ENCODE measurements at regions of chr12 and their contacts with region 1.

Region 1: DNA sequence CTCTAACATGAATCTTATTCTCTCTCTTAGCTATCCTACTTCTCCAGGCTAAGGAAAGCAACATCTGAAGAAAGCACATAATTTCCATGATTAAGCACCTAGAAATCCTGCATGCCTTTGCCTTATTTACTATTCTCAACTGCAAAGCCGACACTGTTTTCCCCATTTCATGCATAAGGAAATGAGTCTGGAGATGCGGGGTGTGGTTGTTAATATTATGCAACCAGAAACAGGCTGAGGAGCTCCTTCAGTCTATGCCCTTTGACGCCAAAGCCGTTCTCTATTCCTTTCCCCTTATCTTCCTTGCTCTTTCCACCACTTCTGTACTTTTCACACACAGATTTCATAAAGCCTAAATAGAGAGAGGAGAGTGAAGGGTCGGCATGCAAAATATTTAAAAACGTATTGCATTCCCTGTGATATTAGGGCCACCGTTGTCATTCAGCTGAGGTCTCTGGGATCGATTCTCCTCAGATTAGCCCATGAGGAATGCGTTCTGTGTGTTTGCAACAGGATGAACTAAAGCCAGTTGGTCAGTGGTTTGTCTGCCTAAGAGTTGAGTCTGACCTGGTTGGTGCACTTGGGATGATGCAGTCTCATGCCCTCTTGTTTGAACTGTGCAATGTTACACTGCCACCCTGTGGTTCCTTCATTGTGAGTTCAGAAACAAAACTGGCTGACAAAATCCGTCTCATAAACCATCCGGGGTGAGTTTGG is 53.1 kb upstream of the PLEKHG7 start:
- DNase-seq: peak; percentile 67
- ATAC-seq: peak; percentile 98
- H3K4me3 ChIP-seq: no peak overlapping the region
- H3K27ac ChIP-seq: no peak overlapping the region
- H3K4me1 ChIP-seq: no peaks in the 10 kb centered on the region
- H3K27me3 ChIP-seq: no peaks in the 10 kb centered on the region
- CTCF ChIP-seq: peak; percentile 72 to 85 (median 76); a peak in 5 of 6 replicates
- EP300 ChIP-seq: no peak
- POLR2A ChIP-seq: no peak
- RAD21 ChIP-seq: peak; percentile 96

Region 2: GRCh38 chr12:91361864-91362263 is 1287.8 kb before region 1 on chr12:
- CTCF ChIA-PET with region 1: interaction called, 3 read pairs
- POLR2A ChIA-PET with region 1: no interaction called
- RAD21 ChIA-PET with region 1: no interaction called
- SMC1A ChIA-PET with region 1: interaction called, 4 read pairs
- in situ Hi-C with region 1: no loop called
- intact Hi-C with region 1: loop called (anchors 5 kb)
- DNase-seq: no peak
- ATAC-seq: peak; percentile 72; the same call in 2 of the 3 replicates
- H3K4me3 ChIP-seq: no peak overlapping the region
- H3K27ac ChIP-seq: no peak overlapping the region
- H3K4me1 ChIP-seq: no peaks in the 10 kb centered on the region
- H3K27me3 ChIP-seq: no peaks in the 10 kb centered on the region
- CTCF ChIP-seq: peak; percentile 32 to 55 (median 47); a peak in 5 of 6 replicates
- EP300 ChIP-seq: no peak
- POLR2A ChIP-seq: no peak
- RAD21 ChIP-seq: peak; percentile 56

Region 3: DNA sequence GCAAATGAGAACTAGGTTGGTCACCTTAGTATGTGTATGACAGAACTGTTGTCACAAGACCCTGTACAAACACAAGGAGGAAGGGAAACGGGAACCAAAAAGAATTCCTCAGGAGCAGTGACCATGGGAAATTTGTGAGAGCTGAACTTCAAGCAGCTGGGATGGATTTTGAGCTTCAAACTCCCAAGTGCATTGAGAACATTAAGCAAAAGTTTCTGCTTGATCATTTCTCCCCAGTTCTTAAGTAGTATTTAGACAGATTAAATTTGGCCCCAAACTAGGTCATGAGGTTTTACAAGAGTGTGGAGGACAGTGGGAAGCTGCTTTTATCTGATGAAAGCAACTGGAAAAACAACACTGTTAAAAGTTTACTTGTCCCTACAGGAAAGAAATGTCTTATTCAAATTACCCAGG is 1261.1 kb before region 1 on chr12:
- CTCF ChIA-PET with region 1: interaction called, 3 read pairs
- POLR2A ChIA-PET with region 1: no interaction called
- RAD21 ChIA-PET with region 1: no interaction called
- SMC1A ChIA-PET with region 1: interaction called, 5 read pairs
- in situ Hi-C with region 1: loop called (anchors 5 kb)
- intact Hi-C with region 1: no loop called
- DNase-seq: no peak
- ATAC-seq: no peak
- H3K4me3 ChIP-seq: no peak overlapping the region
- H3K27ac ChIP-seq: no peak overlapping the region
- H3K4me1 ChIP-seq: no peaks in the 10 kb centered on the region
- H3K27me3 ChIP-seq: no peaks in the 10 kb centered on the region
- CTCF ChIP-seq: no peak
- EP300 ChIP-seq: no peak
- POLR2A ChIP-seq: no peak
- RAD21 ChIP-seq: no peak

Region 4: GRCh38 chr12:91577586-91578539 is 1071.8 kb before region 1 on chr12:
- CTCF ChIA-PET with region 1: interaction called, 6 read pairs
- POLR2A ChIA-PET with region 1: no interaction called
- RAD21 ChIA-PET with region 1: interaction called, 10 read pairs
- SMC1A ChIA-PET with region 1: no interaction called
- in situ Hi-C with region 1: loop called (anchors 25 kb)
- intact Hi-C with region 1: loop called (anchors 2 kb)
- DNase-seq: no peak
- ATAC-seq: peak; percentile 73
- H3K4me3 ChIP-seq: no peak overlapping the region; the same call in 1 of the 2 replicates
- H3K27ac ChIP-seq: no peak overlapping the region
- H3K4me1 ChIP-seq: no peaks in the 10 kb centered on the region
- H3K27me3 ChIP-seq: no peaks in the 10 kb centered on the region
- CTCF ChIP-seq: peak; percentile 36 to 51 (median 41); a peak in 3 of 6 replicates
- EP300 ChIP-seq: no peak
- POLR2A ChIP-seq: no peak
- RAD21 ChIP-seq: peak; percentile 47; the same call in 1 of the 2 replicates

Region 5: GRCh38 chr12:91991399-91992187 is 658.1 kb before region 1 on chr12:
- CTCF ChIA-PET with region 1: no interaction called
- POLR2A ChIA-PET with region 1: no interaction called
- RAD21 ChIA-PET with region 1: no interaction called
- SMC1A ChIA-PET with region 1: interaction called, 5 read pairs
- in situ Hi-C with region 1: no loop called
- intact Hi-C with region 1: loop called (anchors 5 kb)
- DNase-seq: peak; percentile 32
- ATAC-seq: peak; percentile 94
- H3K4me3 ChIP-seq: no peak overlapping the region
- H3K27ac ChIP-seq: no peak overlapping the region
- H3K4me1 ChIP-seq: no peaks in the 10 kb centered on the region
- H3K27me3 ChIP-seq: no peaks in the 10 kb centered on the region
- CTCF ChIP-seq: peak in 2 of 3 experiments; percentile 35 to 56; a peak in 3 of 6 replicates
- EP300 ChIP-seq: no peak
- POLR2A ChIP-seq: no peak
- RAD21 ChIP-seq: peak; percentile 61